Mammary epithelial cell (primary cell): ENCODE measurements at regions of chr20 and their contacts with region 1.

Region 1: DNA sequence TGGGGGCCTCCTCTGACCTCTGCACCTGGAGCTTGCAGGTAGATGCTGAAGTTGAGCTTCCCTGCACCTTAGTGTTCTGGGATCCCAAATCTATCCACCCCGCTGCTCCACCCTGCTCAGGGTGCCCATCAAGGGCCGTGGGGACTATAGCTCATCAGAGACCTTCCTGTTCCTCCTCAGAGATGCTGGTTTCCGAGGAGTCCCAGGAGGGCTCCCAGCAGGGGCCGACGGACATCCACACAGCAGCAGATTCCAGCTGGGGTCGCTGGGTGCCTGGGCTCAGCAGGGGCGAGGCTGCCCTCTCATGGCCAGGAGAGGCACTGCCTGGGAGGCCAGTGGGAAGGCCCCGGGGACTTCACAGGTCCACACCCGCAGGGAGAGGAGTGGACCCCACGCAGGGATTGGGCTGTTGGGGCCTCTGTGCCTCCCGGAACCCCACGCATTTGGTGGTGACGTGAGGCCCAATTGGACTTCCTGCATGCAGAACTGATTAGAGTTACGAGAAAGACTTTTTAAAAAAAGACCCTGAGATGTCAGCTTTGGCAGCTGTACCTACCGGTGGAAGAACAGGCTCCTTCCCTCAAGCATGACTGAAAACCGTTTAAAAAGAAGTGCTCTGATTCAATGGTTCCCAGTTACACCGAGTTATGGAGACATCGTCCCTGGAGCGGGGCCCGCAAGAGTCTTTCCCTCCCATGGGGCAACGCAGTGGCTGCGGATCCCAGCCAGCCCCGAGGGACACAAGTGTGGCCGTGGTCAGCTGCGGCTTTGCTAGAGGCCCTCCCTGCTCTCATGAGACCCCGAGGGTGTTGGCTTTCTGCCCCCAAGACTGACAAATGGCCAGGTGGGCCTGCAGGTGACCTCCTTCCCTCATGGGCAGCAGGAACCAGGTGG is 25.3 kb upstream of the SLCO4A1 start:
- DNase-seq: peak; percentile 26
- H3K4me3 ChIP-seq: no peak overlapping the region
- H3K27ac ChIP-seq: no peak overlapping the region
- H3K4me1 ChIP-seq: no peaks in the 10 kb centered on the region
- H3K27me3 ChIP-seq: no peaks in the 10 kb centered on the region
- CTCF ChIP-seq: peak; percentile 84 to 99

Region 2: DNA sequence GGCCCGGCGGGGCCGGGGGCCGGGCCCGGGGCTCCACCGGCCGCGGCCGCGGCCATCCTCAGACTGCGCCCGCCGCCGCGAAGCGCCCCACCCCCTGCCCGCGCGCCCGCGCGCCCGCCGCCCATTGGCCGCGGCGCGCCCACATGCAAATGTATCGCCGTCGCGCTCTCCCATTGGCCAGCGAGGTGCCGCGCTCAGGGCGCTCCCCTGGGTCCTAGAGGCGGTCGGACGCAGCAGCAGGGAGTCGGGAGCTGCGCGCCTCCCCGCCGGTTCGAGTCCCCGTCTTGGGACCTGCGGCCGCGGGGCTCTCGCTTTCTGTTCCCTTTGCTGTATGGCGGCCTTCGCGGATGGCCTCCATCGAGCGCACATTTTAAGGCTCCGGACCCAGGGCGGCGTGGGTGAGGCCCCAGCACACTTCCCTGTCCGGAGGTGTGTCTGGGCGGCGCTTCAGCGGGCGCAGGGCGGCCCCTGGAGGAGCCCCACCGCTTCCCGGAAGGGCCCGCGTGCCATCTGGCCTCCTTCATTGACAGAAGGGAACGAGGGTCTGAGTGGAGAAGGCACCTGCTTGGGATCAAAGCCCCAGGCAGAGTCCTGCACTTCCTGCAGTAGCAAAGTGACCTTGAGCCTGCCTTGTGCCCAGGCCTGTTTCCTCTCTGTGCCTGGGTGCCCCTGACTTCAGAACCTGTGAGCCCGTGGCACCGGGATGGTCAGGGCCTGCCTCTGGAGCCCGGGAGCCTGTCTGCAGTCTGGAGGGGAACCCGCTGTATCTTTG is 209.6 kb before region 1 on chr20 and contains the start of gene CABLES2:
- CTCF ChIA-PET with region 1: no interaction called
- dilution Hi-C with region 1: no loop called
- in situ Hi-C with region 1: no loop called
- intact Hi-C with region 1: loop called (anchors 5 kb)
- DNase-seq: peak; percentile 91
- H3K4me3 ChIP-seq: peak within 1 kb of the TSS; percentile 56 to 71 (median 69)
- H3K27ac ChIP-seq: no peak within 1 kb of the TSS
- H3K4me1 ChIP-seq: peaks cover 26% of the 10 kb centered on the region
- H3K27me3 ChIP-seq: no peaks in the 10 kb centered on the region
- CTCF ChIP-seq: no peak
- total RNA-seq, gene CABLES2: 2.3 to 4.4 TPM

Region 3: GRCh38 chr20:62500237-62500864 is 116.6 kb before region 1 on chr20:
- CTCF ChIA-PET with region 1: interaction called, 4 read pairs
- dilution Hi-C with region 1: no loop called
- in situ Hi-C with region 1: loop called (anchors 10 kb)
- intact Hi-C with region 1: loop called (anchors 1 kb)
- DNase-seq: peak; percentile 29
- H3K4me3 ChIP-seq: no peak overlapping the region
- H3K27ac ChIP-seq: no peak overlapping the region
- H3K4me1 ChIP-seq: peaks cover 9% of the 10 kb centered on the region
- H3K27me3 ChIP-seq: no peaks in the 10 kb centered on the region
- CTCF ChIP-seq: peak; percentile 56 to 86

Region 4: GRCh38 chr20:62516345-62516744 is 100.6 kb before region 1 on chr20:
- CTCF ChIA-PET with region 1: no interaction called
- dilution Hi-C with region 1: no loop called
- in situ Hi-C with region 1: no loop called
- intact Hi-C with region 1: loop called (anchors 1 kb)
- DNase-seq: no peak
- H3K4me3 ChIP-seq: no peak overlapping the region
- H3K27ac ChIP-seq: no peak overlapping the region
- H3K4me1 ChIP-seq: no peaks in the 10 kb centered on the region
- H3K27me3 ChIP-seq: peaks cover 6% of the 10 kb centered on the region
- CTCF ChIP-seq: no peak